Calu3 (cell line): ENCODE measurements at regions of chr1 and their contacts with region 1.

Region 1: DNA sequence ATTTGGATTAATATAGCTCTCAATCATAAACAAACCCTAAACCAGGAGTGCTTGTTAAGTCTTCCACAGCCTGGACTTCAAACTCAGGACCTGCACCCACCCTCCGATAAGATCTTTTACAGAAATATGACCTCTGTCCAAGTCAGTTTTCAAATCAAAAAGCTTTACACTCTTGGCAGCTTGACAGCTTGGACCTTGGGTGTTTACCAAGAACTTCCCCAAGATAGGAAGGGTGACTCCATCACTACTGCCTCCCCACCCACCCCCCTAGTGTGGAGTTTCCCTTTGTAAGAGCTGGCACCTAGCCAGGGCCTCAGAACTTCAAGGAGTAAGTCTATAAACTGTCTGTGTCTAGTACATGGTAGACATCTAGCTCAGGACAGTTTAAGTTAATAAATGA is 9.6 kb downstream of the BCAR3 start:
- DNase-seq: peak; percentile 70
- H3K4me3 Mint-ChIP-seq: no peak overlapping the region
- H3K27ac Mint-ChIP-seq: no peak overlapping the region
- H3K4me1 Mint-ChIP-seq: peaks cover 57% of the 10 kb centered on the region
- H3K27me3 Mint-ChIP-seq: no peaks in the 10 kb centered on the region
- CTCF ChIP-seq: no peak

Region 2: GRCh38 chr1:93042187-93043056 is 629.6 kb before region 1 on chr1:
- CTCF ChIA-PET with region 1: no interaction called
- intact Hi-C with region 1: no loop called
- DNase-seq: no peak
- H3K4me3 Mint-ChIP-seq: peak overlapping the region; percentile 62
- H3K27ac Mint-ChIP-seq: peak overlapping the region; percentile 15
- H3K4me1 Mint-ChIP-seq: no peaks in the 10 kb centered on the region
- H3K27me3 Mint-ChIP-seq: no peaks in the 10 kb centered on the region
- CTCF ChIP-seq: no peak

Region 3: DNA sequence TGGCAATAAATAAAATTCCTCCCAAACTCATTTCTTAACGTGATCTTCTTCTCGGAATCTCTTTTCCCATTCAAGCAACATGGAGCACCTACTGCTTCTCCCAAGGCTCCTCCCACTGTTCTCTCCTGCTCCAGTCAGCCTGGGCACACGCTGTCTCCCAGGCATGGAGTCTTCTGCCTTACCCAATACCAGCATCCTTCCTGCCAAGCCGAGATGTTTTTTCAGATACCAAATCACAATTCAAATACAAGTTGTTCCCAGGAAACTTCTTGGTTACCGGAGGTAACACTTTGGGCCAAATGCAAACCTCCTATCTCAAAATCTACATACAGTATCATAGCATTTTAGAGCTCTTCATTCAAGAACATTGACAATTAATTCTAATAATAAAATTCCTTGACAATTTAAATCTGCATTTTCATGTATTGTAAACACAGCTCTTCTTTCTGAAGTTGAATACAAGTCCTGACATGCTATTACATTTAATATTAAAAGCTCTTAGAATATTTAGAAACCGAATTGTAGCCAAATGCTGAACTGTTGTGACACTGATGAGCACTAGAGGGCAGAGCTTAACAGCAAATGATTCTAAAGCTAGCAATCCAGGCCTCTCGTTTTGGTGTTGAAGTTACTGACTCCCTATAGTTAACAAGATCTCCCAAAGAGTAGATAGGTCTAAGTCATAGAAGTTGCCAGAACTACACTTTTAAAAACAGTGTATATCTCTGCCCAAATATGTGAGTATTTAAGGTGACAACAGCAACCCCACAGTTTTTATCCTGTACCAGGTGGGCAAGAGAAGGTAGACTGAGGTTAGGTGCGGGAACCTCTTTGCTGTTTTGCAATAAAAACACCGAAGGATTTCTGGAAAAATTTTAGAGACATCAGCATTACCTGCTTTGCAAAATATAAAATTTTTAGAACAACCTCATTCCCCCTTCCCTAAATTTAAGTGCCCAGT is 42.7 kb before region 1 on chr1:
- CTCF ChIA-PET with region 1: interaction called, 3 read pairs
- intact Hi-C with region 1: loop called (anchors 5 kb)
- DNase-seq: peak; percentile 49
- H3K4me3 Mint-ChIP-seq: no peak overlapping the region
- H3K27ac Mint-ChIP-seq: peak overlapping the region; percentile 7
- H3K4me1 Mint-ChIP-seq: peaks cover 38% of the 10 kb centered on the region
- H3K27me3 Mint-ChIP-seq: no peaks in the 10 kb centered on the region
- CTCF ChIP-seq: peak; percentile 77

Region 4: DNA sequence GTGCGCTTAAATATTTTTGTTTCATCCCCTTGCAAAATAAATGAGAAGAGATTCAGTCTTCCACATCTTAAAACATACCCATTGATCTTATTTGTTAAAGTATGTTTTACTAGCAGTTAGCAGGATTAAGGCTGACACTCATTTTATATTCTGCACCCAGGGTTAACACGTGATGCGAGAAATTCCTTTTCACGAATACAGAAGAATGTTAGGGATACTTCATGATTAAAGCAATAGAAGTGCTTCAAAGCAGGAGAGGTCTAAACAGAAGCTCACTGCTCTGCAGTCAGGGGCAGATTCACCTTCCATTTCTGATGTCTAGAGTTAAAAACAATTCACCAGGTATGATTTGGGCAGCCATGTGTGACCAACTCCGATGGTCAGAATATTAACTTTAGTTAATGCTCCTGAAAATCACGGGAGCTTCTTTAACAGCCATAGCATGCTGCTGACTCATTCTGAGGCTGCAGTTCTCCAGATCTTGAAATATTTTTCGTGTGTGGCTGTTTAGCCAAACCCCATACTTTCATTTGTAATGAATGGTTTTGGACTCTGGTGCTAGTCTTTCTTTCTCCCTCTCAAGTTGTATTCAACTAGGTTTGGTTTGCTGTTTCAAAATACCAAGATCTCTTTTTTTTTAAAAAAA is 10.1 kb before region 1 on chr1:
- CTCF ChIA-PET with region 1: interaction called, 14 read pairs
- intact Hi-C with region 1: no loop called
- DNase-seq: peak; percentile 12
- H3K4me3 Mint-ChIP-seq: peak overlapping the region; percentile 53
- H3K27ac Mint-ChIP-seq: peak overlapping the region; percentile 95
- H3K4me1 Mint-ChIP-seq: peaks cover 44% of the 10 kb centered on the region
- H3K27me3 Mint-ChIP-seq: no peaks in the 10 kb centered on the region
- CTCF ChIP-seq: no peak

Region 5: DNA sequence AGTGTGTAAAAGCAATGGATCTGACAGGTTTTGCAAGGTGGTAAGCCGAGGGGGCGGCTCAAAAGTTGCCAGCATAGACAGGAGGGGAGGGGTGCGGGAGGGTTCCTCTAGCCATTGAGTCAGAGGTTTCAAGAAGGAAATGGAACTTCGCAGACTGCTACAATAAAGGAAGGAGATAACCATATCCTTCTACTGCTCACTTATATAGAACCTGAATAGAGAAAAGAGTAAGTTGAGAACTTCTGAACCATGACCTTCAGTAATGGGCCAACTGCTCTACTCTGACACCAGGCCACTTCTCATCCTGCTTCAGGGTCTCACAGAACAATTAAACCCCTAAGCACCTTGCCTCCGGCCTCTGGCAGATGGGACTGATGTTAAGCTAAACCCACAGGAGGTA is 35.9 kb after region 1 on chr1:
- CTCF ChIA-PET with region 1: no interaction called
- intact Hi-C with region 1: no loop called
- DNase-seq: no peak
- H3K4me3 Mint-ChIP-seq: no peak overlapping the region
- H3K27ac Mint-ChIP-seq: no peak overlapping the region
- H3K4me1 Mint-ChIP-seq: peaks cover 20% of the 10 kb centered on the region
- H3K27me3 Mint-ChIP-seq: no peaks in the 10 kb centered on the region
- CTCF ChIP-seq: no peak

Region 6: DNA sequence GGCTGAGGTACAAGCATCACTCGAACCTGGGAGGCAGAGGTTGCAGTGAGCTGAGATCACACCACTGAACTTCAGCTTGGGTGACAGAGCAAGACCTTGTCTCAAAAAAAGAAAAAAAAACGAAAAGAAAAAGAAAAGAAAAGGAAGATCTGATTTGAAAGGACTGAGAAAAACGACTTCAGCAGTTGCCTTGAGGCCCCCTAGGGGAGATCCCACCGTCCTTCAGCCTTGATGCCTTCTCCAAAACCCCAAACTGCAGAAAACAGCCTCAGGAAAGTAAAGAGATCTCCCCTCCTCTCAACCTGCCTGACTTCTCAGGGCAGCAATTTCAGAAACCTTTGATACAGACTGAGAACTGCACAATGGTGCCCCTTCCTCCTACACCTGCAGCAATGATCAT is 60.4 kb after region 1 on chr1:
- CTCF ChIA-PET with region 1: no interaction called
- intact Hi-C with region 1: no loop called
- DNase-seq: no peak
- H3K4me3 Mint-ChIP-seq: no peak overlapping the region
- H3K27ac Mint-ChIP-seq: no peak overlapping the region
- H3K4me1 Mint-ChIP-seq: no peaks in the 10 kb centered on the region
- H3K27me3 Mint-ChIP-seq: no peaks in the 10 kb centered on the region
- CTCF ChIP-seq: no peak

Region 7: GRCh38 chr1:94012686-94013624 is 340.9 kb after region 1 on chr1:
- CTCF ChIA-PET with region 1: no interaction called
- intact Hi-C with region 1: no loop called
- DNase-seq: no peak
- H3K4me3 Mint-ChIP-seq: no peak overlapping the region
- H3K27ac Mint-ChIP-seq: no peak overlapping the region
- H3K4me1 Mint-ChIP-seq: no peaks in the 10 kb centered on the region
- H3K27me3 Mint-ChIP-seq: peaks cover 67% of the 10 kb centered on the region
- CTCF ChIP-seq: no peak